H1 (cell line): ENCODE measurements at regions of chr12 and their contacts with region 1.

Region 1: DNA sequence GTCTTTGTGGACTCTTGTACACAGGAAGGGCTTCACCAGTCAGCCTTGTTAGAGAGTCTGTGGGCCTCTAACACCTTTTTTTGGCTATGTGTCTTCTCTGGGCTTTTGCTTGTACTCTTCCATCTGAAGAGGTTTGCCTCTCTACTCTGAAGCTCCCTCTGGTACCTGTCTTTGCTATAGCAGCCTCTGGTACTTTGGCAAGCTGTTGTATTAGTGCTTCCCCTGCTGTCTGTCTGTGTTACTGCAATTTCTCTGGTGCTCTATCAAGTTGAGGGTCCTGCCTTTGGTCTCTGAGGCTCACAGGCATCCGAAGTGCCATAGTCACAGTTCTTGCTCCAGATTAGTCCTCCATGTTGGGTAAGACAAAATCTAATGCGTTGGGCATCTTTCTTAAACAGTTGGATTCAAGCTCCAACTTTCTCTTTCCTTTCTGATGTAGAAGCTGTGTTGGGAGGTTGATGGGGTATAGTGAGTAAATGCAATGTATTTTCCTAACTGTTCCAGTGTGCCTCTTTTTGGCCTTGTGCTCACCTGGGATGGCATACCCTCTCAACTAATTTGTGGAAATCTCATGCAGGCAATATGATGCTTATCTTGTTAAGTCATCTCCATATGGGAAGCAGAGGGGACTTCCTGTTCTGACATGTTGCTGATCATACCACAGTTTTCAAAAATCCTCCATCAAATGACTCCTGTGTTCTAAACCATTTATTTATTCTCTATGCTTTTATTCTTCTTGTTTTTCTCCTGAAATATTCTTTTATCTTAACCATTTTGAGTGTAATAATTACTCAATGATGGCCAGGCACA is 88.8 kb downstream of the ATF7IP start:
- DNase-seq: peak in 1 of 2 experiments; percentile 15
- H3K4me3 ChIP-seq: no peak overlapping the region
- H3K27ac ChIP-seq: no peak overlapping the region
- H3K4me1 ChIP-seq: peaks cover 0 to 5% (median 2%) of the 10 kb centered on the region in 4 experiments; a peak in 3 of 7 replicates
- H3K27me3 ChIP-seq: no peaks in the 10 kb centered on the region
- CTCF ChIP-seq: peak; percentile 28 to 99 (median 97)
- EP300 ChIP-seq: no peak
- POLR2A ChIP-seq: no peak
- RAD21 ChIP-seq: peak; percentile 93

Region 2: GRCh38 chr12:14239350-14239934 is 214.9 kb before region 1 on chr12:
- CTCF ChIA-PET with region 1: interaction called, 82 read pairs
- POLR2A ChIA-PET with region 1: no interaction called
- DNase-seq: peak in 1 of 2 experiments; percentile 61
- H3K4me3 ChIP-seq: peak overlapping the region in 1 of 4 experiments; percentile 26; a peak in 1 of 8 replicates
- H3K27ac ChIP-seq: no peak overlapping the region; the same call in 1 of the 2 replicates
- H3K4me1 ChIP-seq: peaks cover 2 to 12% (median 5%) of the 10 kb centered on the region in 4 experiments; a peak in 6 of 7 replicates
- H3K27me3 ChIP-seq: no peaks in the 10 kb centered on the region
- CTCF ChIP-seq: peak in 2 of 3 experiments; percentile 6 to 21; a peak in 2 of 4 replicates
- EP300 ChIP-seq: no peak
- POLR2A ChIP-seq: 0 out of 3 replicates have a peak, but pooled peaks of 1 of the 2 experiments have one; percentile 27
- RAD21 ChIP-seq: peak; percentile 22 to 35

Region 3: GRCh38 chr12:14394317-14395073 is 59.8 kb before region 1 on chr12:
- CTCF ChIA-PET with region 1: interaction called, 12 read pairs
- POLR2A ChIA-PET with region 1: no interaction called
- DNase-seq: no peak
- H3K4me3 ChIP-seq: peak overlapping the region in 1 of 4 experiments; percentile 25; a peak in 1 of 8 replicates
- H3K27ac ChIP-seq: no peak overlapping the region
- H3K4me1 ChIP-seq: peaks cover 0 to 35% (median 4%) of the 10 kb centered on the region in 4 experiments; a peak in 4 of 7 replicates
- H3K27me3 ChIP-seq: no peaks in the 10 kb centered on the region
- CTCF ChIP-seq: no peak
- EP300 ChIP-seq: peak in 1 of 2 experiments; percentile 21; a peak in 1 of 3 replicates
- POLR2A ChIP-seq: no peak
- RAD21 ChIP-seq: no peak

Region 4: GRCh38 chr12:14431975-14432374 is 22.3 kb before region 1 on chr12:
- CTCF ChIA-PET with region 1: interaction called, 27 read pairs
- POLR2A ChIA-PET with region 1: no interaction called
- DNase-seq: no peak
- H3K4me3 ChIP-seq: no peak overlapping the region
- H3K27ac ChIP-seq: no peak overlapping the region
- H3K4me1 ChIP-seq: peaks cover 0 to 3% (median 0%) of the 10 kb centered on the region in 4 experiments; a peak in 1 of 7 replicates
- H3K27me3 ChIP-seq: peaks cover 0 to 1% (median 0%) of the 10 kb centered on the region in 4 experiments; a peak in 1 of 7 replicates
- CTCF ChIP-seq: no peak
- EP300 ChIP-seq: no peak
- POLR2A ChIP-seq: no peak
- RAD21 ChIP-seq: no peak

Region 5: GRCh38 chr12:15293731-15294130 is 839.4 kb after region 1 on chr12:
- CTCF ChIA-PET with region 1: no interaction called
- POLR2A ChIA-PET with region 1: no interaction called
- DNase-seq: no peak
- H3K4me3 ChIP-seq: no peak overlapping the region
- H3K27ac ChIP-seq: no peak overlapping the region
- H3K4me1 ChIP-seq: no peaks in the 10 kb centered on the region
- H3K27me3 ChIP-seq: no peaks in the 10 kb centered on the region
- CTCF ChIP-seq: no peak
- EP300 ChIP-seq: no peak
- POLR2A ChIP-seq: no peak
- RAD21 ChIP-seq: no peak